Right cardiac atrium (tissue), 5 donors: ENCODE measurements at regions of chr22 and their contacts with region 1.

Region 1: DNA sequence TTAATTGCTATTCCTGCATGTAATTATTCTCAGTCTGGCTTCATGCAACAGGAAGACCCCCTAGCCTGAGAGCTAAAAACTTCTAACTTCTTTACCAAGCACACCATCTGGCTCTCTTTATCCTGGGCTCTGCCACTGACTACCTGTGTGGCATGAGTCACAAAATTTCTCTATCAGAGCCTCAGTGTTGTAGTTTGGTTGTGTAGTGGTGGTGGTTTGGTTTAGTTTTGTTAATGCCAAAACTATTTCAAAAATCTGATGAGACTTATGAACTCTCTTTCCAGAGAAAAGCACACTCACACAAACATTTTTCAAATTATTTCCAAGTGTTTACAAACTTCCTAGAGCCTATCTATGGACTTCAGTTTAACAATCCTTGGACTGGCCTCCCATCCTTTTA is 7.5 kb upstream of the IL17RA start:
- DNase-seq: no peak
- ATAC-seq: no peak
- H3K4me3 ChIP-seq: no peak overlapping the region
- H3K27ac ChIP-seq: no peak overlapping the region
- H3K4me1 ChIP-seq: no peaks in the 10 kb centered on the region
- H3K27me3 ChIP-seq: no peaks in the 10 kb centered on the region

Region 2: GRCh38 chr22:17171313-17172171 is 94.3 kb after region 1 on chr22:
- intact Hi-C with region 1: loop called in 3 of 4 experiments (anchors 10 kb)
- DNase-seq: peak; percentile 94 to 97 (median 96)
- ATAC-seq: peak; percentile 96
- H3K4me3 ChIP-seq: peak overlapping the region; percentile 66
- H3K27ac ChIP-seq: peak overlapping the region; percentile 83
- H3K4me1 ChIP-seq: no peaks in the 10 kb centered on the region
- H3K27me3 ChIP-seq: no peaks in the 10 kb centered on the region

Region 3: GRCh38 chr22:17201285-17201945 is 124.2 kb after region 1 on chr22:
- intact Hi-C with region 1: loop called in 1 of 4 experiments (anchors 10 kb)
- DNase-seq: no peak
- ATAC-seq: no peak
- H3K4me3 ChIP-seq: no peak overlapping the region
- H3K27ac ChIP-seq: no peak overlapping the region
- H3K4me1 ChIP-seq: no peaks in the 10 kb centered on the region
- H3K27me3 ChIP-seq: no peaks in the 10 kb centered on the region

Region 4: GRCh38 chr22:17492247-17492646 is 415.0 kb after region 1 on chr22:
- intact Hi-C with region 1: loop called in 1 of 4 experiments (anchors 10 kb)
- DNase-seq: no peak
- ATAC-seq: peak; percentile 51 to 87
- H3K4me3 ChIP-seq: no peak overlapping the region
- H3K27ac ChIP-seq: peak overlapping the region; percentile 78
- H3K4me1 ChIP-seq: peaks cover 2% of the 10 kb centered on the region
- H3K27me3 ChIP-seq: no peaks in the 10 kb centered on the region